ENCODE measurements at regions of chr2 and their contacts with region 1.

Region 1: DNA sequence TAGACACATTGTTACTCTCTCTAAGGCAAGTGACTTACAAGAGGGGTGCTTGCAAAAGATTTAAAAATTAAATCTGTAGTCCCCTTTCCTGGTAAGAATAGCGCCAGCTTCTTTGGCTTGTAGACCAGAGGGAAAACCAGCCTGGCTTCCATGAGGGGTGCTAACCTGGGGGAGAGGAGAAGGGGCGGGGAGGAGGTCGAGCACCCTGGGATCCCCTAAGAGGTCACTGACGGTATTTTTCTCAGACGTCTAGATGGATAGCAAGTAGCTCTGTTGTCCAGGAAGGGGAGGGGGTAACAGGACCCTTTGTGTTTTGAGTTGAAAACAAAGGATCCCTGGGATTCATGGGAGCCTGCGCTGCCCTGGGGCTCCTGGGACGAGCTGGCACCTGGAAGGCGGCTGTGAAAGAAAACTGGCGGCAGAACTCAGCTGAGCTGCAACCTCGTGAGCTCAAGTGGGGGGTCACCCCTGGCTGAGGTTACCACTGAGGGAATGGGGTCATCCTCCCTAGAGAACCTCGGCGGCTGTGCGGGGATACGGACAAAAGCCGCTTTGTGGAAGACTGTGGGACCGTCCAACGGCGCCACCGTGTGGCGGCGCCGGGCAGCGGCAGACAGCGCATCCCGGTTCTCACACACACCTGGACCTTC is 37.8 kb upstream of the MRPL19 start:
- DNase-seq: peak; percentile 75

Region 2: DNA sequence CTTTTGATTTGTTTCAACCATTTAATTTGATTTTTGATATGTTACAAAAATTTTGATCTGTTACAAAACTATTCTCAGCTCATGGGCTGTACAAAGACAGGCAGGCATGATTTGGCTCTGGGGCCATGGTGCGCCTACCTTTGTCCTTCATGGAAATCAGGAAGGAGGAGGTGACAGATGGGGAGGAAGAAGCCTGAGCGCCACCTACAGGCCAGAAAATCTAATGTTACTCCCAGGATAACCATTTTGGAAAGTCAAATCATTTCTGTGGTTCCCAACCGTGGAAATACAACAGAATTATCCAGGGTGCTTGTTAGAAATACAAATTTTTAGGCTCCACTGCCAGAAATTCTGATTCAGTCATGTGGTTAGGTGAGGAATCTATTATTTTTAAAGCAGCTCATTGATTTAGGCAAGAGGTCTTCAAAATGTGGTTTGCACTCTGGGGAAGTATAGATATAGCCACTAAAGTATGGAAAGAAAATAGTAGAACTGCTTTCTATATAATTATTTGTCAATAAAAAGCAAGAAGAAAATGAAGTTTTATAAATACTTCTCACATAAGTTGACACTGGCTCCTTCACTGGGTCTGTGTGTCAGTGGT is 142.0 kb before region 1 on chr2:
- in situ Hi-C with region 1: loop called (anchors 25 kb)
- DNase-seq: peak; percentile 79

Measured in SK-MEL-5 (cell line).